ENCODE measurements at regions of chr22 and their contacts with region 1.

Region 1: DNA sequence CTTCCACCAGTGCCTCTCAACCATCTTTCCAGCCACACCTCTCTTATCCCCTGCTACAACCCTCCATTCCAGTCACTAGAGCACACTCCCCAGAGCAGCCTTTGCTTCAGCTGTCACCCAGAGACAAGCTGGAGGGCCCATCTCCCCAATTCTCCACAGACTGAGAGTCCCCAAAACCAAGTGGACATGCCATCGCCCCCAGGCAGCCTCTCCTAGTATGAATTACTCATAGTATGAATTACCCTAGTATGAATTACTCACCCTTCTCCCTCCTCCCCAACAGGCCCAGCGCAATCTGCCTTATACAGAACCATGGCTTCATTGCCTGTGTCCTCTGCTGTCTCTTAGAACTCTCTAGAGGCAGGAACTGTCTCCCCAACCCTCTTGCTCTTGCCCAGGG is 24.8 kb downstream of the MYH9 start:
- DNase-seq: no peak
- H3K4me3 ChIP-seq: no peak overlapping the region
- H3K27ac ChIP-seq: peak overlapping the region; percentile 59 to 99 (median 88)
- H3K4me1 ChIP-seq: peaks cover 91 to 99% of the 10 kb centered on the region in 2 donors
- H3K27me3 ChIP-seq: no peaks in the 10 kb centered on the region
- CTCF ChIP-seq: no peak
- POLR2A ChIP-seq: no peak

Region 2: DNA sequence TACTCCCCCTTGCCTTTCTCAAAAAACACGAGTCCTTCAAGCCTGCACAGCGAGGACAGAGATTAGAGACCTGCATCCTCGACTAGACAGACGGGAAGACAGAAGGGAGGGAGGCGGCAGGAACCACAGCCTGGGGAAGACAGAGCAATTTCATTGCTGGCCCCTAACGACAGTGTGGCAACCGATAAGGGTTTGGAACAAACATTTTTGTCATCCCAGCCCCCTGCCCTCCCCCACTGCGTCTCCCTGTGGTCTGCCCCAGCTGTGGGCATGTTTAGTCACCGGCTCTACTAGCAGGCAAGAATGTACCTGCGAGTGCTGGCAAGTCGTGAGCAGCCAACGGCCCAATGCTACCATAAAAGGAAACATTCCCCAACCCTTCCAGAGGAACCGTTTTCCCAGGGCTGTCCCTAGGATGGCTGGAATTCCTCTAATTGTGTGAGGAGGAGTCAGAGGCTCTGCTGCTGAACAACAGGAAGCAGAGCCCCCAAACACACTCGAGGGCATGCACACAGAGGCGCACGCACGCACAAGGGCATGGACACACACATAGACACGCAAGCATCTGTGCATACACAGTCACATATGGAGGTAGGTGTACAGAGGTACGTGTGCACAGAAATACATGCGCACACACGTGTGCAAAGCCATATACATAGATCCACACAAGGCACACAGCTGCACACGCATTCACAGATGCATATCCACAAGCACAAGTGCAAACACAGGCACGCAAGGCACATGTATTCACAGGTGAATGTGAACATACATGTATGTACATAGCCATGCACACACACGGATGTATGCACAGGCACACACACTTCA is 33.5 kb before region 1 on chr22:
- intact Hi-C with region 1: loop called (anchors 5 kb)
- DNase-seq: peak; percentile 76 to 87
- H3K4me3 ChIP-seq: no peak overlapping the region
- H3K27ac ChIP-seq: peak overlapping the region; percentile 98 to 99 (median 98)
- H3K4me1 ChIP-seq: peaks cover 93 to 100% of the 10 kb centered on the region in 2 donors
- H3K27me3 ChIP-seq: no peaks in the 10 kb centered on the region
- CTCF ChIP-seq: no peak
- POLR2A ChIP-seq: peak in 1 of 2 donors; percentile 43

Measured in thyroid gland (tissue), 4 donors.